ENCODE measurements at regions of chr4 and their contacts with region 1.

Region 1: DNA sequence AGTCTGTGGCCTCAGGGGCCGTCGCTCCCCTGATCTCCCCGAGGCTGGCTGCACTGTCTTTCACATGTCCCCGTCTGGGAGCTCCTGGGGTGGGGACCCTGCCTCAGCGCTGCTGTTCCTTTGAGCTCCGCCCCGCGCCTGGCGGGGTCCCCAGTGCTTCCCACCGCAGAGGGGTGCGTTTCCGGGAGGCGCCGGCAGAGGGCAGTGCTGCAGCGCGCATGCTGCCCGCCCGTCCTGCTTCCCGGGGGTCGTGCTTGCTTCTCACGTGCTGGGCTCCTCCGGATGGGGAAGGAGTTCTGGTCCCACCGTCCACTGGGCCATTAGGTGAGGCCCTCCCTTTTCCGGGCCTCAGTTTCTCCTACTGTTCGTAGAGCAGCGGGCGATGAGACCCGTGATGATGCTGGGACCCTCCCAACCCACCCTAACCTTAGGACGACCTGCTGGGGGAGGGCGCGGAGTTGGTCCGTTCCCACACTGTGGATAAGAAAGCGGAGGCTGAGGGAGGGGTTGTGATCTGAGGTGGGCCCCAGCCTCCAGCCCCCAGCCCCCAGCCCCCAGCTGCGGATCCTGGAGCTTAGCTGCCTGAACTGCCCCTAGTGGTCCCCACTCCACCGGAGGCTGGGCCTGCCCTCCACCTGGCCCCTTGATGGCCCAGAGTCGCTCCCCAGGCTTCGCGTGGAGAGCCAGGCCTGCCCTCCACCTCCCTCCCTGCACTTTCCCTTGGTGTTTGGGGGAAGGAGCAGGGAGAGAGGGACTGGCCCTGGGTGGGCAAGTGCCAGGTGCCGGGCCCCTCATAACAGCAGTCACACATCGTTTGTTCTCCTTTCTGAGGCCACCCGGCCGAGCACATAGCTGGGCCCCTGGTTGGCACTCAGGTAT is 15.3 kb downstream of the CPZ start:
- DNase-seq: no peak
- ATAC-seq: peak in 3 of 4 donors; percentile 41 to 52 (median 41)
- H3K4me3 ChIP-seq: no peak overlapping the region
- H3K27ac ChIP-seq: no peak overlapping the region
- H3K4me1 ChIP-seq: no peaks in the 10 kb centered on the region
- H3K27me3 ChIP-seq: peaks cover 0 to 2% (median 0%) of the 10 kb centered on the region in 3 donors
- CTCF ChIP-seq: peak; percentile 85

Region 2: DNA sequence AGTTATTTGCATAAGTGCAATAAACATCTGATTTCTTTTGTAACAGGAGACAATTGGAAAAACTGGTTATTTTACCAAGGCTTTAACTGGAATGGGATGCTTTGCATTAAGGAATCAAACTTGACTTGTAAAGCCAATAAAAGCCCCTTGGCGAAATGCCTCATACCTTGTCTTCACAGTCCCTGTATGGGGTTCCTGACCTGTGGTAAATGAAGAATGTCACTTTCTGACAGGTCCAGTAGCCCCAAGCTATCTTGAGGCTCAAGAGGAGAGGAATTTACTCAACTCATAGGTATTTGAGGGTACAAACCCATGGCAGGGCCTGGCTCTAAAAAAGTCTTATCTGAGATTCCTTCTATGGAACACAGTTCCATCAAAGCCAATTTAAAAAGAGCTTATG is 245.4 kb before region 1 on chr4:
- intact Hi-C with region 1: no loop called
- DNase-seq: no peak
- ATAC-seq: no peak
- H3K4me3 ChIP-seq: no peak overlapping the region
- H3K27ac ChIP-seq: no peak overlapping the region
- H3K4me1 ChIP-seq: no peaks in the 10 kb centered on the region
- H3K27me3 ChIP-seq: no peaks in the 10 kb centered on the region
- CTCF ChIP-seq: no peak

Region 3: DNA sequence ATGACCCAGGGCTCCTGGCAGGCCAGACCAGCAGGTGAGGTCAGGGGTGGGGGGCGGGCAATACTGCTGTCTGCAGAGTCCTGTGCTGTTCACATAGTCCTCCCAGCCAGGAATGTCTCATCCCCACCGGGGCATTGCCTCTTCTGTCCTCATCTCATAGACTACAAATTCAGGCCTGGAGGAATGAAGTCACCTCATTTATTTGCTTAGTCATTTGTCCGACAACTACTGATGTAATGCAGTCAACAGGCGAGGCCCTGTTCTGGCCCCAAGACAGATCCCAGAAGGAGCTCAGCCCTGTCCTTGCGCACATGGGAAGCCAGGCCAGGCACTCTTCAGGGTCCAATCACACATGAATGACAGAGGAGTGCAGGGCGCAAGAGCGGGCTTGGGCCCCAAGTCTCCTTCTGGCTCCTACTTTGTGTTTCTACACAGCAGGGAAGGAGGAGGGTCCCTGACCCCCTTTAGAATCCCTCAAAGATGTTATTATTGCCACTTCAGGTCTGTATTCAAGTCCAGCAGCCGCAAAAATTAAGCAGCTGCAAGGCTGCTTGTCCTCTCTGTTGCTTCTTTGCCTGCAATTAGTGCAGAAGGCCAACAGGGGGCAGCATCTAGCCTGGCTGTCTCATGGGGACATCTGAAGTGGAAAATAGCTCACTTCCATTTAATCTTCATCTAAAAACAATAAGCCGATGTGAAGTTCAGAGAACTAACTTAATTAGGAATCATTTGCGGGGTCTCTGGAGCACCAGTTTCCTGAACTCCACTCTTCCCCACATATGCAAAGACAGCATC is 279.0 kb after region 1 on chr4:
- intact Hi-C with region 1: no loop called
- DNase-seq: no peak
- ATAC-seq: no peak
- H3K4me3 ChIP-seq: no peak overlapping the region
- H3K27ac ChIP-seq: no peak overlapping the region
- H3K4me1 ChIP-seq: no peaks in the 10 kb centered on the region
- H3K27me3 ChIP-seq: peaks cover 0 to 58% (median 13%) of the 10 kb centered on the region in 3 donors
- CTCF ChIP-seq: no peak

Region 4: DNA sequence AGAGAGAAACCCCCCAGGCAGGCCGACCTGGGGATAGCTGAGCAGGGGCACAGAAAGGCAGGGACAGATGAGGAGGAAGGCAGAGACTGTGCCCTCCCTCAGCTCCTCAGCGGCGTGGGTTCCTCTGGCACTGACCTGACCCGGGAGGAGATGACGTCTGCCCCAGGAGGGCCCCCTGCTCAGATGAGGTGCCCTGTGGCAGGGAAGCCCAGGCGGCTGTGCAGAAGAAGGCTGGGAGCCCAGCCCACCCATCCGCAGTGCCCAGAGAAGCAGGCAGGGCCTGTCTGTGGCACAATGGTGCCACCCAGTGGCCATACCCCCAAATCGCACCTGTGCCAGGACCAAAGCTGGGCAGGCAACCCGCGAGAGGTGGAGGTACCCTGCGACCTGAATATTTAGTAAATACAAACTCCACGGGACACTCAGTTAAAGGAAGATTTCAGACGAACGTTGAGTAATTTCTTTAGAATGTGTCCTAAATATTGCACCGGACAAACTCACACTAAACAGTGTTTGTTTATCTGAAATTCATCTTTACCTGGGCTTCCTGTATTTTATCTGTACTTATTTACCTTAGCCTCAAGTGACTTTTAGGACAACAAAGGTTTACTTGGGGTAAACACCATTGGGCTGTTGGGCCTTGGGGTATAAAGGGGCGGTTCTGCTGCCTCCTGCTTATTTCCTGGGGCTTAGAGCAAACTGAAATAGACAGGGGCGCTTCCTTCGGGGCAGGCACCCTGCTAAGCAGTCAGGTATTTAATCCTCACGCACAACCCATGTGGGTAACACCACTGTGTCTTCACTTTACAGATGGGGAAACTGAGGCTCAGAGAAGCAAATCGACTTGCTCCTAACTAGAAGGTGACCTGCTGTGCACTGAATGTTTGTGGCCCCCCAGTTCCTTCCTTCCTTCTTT is 310.3 kb after region 1 on chr4:
- intact Hi-C with region 1: loop called (anchors 10 kb)
- DNase-seq: peak; percentile 47 to 69
- ATAC-seq: peak; percentile 54 to 80 (median 64)
- H3K4me3 ChIP-seq: no peak overlapping the region
- H3K27ac ChIP-seq: no peak overlapping the region
- H3K4me1 ChIP-seq: no peaks in the 10 kb centered on the region
- H3K27me3 ChIP-seq: peaks cover 3 to 23% (median 7%) of the 10 kb centered on the region in 3 donors
- CTCF ChIP-seq: peak; percentile 69